BJ (cell line): ENCODE measurements at regions of chr4 and their contacts with region 1.

Region 1: DNA sequence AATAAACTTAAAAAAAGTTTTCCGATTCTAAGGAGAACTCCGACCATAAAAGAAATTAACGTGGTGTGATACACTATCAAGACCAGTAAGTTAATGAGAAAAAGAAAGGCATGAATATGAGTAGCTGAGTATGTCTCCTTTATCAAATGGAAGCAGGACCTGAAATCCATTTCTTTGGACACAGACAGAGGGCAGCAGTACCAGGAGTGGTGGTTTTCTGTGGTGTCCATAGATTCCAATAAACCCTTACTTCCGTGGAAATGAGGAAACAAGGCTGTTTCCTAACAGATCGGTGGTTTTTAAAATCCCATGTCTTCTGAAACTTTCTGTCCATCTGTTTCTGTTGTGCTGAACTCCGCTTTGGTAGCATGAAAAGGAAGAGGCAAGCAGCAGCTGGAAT is 128.5 kb upstream of the TSPAN5 start:
- DNase-seq: no peak
- H3K4me3 ChIP-seq: no peak overlapping the region
- H3K27me3 ChIP-seq: no peaks in the 10 kb centered on the region
- CTCF ChIP-seq: peak; percentile 53

Region 2: DNA sequence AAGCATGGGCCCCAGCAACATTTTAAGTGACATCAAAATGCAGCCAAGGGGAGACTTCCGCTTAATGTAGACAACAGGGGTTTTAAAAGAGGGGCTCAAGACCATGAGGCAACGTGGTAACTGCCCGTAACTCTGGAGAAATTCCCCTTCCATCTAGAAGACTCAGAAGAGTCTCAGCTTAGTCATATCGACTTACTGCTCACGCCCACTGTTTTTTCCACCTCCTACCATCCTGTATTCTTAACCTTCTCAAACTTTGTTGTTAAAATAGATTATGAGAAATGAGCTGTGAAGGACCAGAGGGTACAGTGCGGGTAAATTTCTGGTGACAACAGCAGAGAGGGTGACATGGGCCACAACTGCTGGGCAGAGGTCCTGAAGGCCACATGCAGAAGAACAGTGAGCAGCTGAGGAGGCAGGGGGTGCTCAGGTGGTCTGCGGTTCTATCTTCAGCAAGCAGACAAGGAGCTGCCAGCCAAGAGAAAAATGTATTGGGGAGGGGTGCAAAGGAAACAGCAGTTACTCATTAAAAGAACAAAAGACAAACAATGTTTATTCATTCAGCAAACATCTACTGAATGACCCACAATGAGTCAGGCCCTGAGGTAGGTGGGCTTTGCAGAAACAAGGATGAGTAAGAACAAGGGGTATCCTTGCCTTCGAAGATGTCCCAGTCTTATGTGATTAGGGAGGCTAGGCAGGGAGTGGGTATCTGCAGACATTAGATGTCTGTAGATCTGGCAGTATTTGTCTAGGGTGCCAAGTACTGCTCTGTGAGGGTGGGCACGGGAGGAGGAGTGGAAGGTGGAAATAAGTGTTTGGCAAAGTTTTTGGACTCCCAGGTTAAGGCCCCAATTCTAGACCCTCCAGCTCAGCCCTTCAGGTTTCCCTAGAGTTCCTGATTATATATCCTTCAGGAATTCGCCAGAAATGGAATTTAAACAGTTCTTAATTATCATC is 303.7 kb before region 1 on chr4:
- CTCF ChIA-PET with region 1: no interaction called
- POLR2A ChIA-PET with region 1: interaction called, 16 read pairs
- DNase-seq: no peak
- H3K4me3 ChIP-seq: no peak overlapping the region
- H3K27me3 ChIP-seq: no peaks in the 10 kb centered on the region
- CTCF ChIP-seq: no peak

Region 3: DNA sequence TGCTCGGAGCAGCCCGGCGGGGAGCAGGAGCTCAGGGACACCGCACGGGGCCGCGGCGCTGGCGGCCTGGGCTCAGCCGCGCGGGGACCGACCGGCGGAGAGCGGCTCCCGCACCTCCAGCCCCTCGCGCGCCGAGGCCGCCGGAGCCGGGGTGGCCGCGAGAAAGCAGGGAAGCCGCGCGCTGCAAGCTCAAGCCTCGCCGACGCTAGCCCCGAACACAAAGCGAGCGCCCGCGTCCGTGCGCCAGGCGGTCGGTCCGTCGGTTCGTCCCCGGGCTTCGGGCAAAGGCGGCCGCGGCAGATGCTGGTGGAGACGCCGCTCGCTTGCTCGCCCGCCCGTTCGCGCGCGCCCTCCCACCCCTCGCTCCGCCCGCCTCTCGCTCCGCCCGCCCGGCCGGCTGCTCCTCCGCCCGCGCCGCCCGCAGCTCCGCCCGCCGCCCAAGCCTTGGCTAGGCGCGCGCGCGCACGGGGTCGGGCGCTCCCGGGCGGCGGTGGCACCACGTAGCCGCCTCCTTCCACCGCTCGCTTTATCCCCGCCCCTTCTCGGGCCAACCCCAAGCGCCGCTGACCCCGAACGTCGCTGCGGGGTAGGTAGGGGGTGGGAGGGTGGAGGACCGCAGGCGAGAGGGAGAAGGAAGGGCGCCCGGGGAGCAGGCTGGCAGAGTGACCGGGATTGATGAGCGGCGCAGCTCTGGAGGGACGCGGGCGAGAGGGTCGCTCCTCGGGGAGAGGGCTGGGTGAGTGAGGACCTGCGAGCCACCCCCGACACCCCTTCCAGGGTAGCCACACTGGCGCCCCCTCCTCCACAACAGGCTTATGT is 128.4 kb before region 1 on chr4 and contains the start of gene TSPAN5:
- CTCF ChIA-PET with region 1: no interaction called
- POLR2A ChIA-PET with region 1: no interaction called
- DNase-seq: no peak
- H3K4me3 ChIP-seq: peak within 1 kb of the TSS; percentile 75
- H3K27me3 ChIP-seq: no peaks in the 10 kb centered on the region
- CTCF ChIP-seq: no peak
- polyA plus RNA-seq, gene TSPAN5: 74.5 and 96.5 TPM in 2 replicates

Region 4: DNA sequence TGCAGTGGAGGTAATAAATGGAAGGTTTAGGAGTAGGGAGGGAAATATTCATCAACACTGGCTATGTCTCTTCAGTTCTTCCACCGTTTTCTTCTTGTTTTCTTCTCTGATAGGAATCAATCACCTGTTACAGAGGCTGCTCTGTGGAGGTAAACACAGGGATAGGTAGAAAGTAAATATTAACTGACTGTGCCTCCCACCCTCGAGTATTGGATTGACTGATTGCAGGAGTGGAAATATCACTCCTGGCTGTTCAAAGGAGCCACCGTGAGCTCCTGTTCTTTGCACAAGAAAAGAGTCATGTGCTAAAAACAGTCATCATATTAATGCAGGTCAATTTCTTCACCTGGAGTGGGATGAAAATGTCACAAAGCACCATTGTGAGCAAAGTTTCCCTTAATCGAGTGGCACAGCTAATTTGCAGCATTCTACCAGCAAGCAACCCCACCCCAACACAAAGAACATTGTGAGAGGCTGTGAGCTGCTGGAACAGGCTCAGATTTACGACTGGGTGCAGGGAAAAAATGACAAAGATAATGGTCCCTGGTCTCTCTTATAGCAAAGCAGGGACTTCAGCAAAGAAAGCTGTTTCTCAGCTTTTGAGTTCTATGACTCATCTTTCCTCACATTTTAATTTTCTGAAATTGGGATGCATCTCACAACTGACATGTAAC is 14.8 kb before region 1 on chr4:
- CTCF ChIA-PET with region 1: no interaction called
- POLR2A ChIA-PET with region 1: no interaction called
- DNase-seq: no peak
- H3K4me3 ChIP-seq: no peak overlapping the region
- H3K27me3 ChIP-seq: no peaks in the 10 kb centered on the region; the same call in none of the 2 replicates
- CTCF ChIP-seq: no peak

Region 5: DNA sequence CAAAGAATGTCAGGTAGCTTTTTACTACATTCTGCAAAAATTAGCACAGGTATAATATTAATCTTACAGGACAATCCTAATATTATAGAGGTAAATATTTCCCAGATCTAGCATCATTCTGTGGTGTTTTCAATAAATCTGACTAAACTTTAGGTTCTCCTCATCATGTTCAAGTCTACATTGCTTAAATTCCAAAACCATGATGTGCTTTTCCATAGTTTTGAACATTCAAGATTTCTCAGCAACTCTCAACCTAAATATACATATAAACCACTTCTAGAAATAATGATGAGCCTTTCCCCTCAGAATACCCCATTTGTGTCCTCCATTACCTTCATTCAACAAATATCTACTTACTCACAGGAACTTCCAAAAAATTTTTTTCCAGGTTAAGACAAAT is 119.0 kb after region 1 on chr4:
- CTCF ChIA-PET with region 1: no interaction called
- POLR2A ChIA-PET with region 1: no interaction called
- DNase-seq: no peak
- H3K4me3 ChIP-seq: no peak overlapping the region
- H3K27me3 ChIP-seq: no peaks in the 10 kb centered on the region
- CTCF ChIP-seq: no peak